Activated CD4-positive, alpha-beta memory T cell treated with anti-CD3 and anti-CD28 coated beads for 36 hours (primary cell): ENCODE measurements at regions of chr16 and their contacts with region 1.

Region 1: DNA sequence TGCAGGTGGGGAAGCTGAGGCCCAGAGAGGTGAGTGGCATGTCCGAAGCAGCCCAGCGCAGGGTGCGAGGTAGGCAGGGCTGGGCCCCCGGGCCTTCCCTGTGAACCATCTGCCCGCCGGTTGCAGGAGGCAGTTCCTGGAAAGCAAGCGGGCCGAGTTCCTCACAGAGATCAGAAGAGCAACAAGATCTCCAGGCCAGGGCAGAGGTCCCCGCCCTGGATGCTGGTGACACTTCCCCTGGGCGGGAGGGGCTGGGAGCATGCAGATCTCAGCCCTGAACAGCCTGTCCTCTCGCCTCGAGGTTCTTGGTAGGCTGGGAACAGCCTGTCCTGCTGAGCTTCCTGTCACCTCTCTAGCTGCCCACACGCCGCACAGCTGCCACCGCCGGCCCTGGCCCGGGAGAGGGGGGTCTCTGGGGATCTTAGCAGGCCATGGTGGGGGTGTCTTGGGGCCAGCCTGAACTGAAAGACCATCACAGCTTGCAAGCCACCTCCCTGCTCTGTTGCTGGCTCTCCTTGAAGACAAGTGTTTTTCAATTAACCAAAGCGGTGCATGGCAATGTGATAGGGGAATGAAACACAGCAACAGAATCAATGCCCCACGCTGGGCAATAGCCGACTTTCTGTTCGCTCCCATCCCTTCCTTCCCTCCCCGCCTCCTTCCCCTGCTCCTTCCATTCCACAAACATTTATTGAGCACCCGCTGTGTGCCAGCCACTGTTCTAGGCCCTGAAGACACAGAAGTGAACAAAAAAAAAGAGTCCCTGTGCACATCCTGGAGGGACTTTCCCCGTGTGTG is 31.7 kb downstream of the SOCS1 start:
- DNase-seq: peak; percentile 88
- H3K4me3 Mint-ChIP-seq: peak overlapping the region; percentile 71
- H3K27ac Mint-ChIP-seq: peak overlapping the region; percentile 99
- H3K4me1 Mint-ChIP-seq: peaks cover 56% of the 10 kb centered on the region
- H3K27me3 Mint-ChIP-seq: no peaks in the 10 kb centered on the region

Region 2: DNA sequence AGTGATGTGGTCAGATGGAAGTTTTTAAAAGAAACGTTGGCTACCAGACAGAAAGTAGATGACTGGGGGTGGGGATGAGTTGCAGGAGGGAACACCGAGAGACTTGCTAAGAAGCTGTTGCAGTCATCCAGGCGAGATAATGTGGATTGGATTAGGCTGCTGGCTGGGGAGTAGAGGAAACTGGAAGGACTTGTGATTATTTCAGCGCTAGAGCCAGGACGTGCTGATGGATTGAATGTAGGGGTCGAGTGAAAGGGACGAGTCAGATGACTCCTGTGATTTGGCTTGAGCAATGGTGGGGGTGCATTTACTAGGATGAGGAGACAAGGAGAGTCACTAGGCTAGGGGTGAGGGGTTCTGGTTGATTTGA is 191.4 kb before region 1 on chr16:
- CTCF ChIA-PET with region 1: no interaction called
- POLR2A ChIA-PET with region 1: no interaction called
- intact Hi-C with region 1: no loop called
- DNase-seq: no peak
- H3K4me3 Mint-ChIP-seq: no peak overlapping the region
- H3K27ac Mint-ChIP-seq: no peak overlapping the region
- H3K4me1 Mint-ChIP-seq: peaks cover 2% of the 10 kb centered on the region
- H3K27me3 Mint-ChIP-seq: no peaks in the 10 kb centered on the region

Region 3: DNA sequence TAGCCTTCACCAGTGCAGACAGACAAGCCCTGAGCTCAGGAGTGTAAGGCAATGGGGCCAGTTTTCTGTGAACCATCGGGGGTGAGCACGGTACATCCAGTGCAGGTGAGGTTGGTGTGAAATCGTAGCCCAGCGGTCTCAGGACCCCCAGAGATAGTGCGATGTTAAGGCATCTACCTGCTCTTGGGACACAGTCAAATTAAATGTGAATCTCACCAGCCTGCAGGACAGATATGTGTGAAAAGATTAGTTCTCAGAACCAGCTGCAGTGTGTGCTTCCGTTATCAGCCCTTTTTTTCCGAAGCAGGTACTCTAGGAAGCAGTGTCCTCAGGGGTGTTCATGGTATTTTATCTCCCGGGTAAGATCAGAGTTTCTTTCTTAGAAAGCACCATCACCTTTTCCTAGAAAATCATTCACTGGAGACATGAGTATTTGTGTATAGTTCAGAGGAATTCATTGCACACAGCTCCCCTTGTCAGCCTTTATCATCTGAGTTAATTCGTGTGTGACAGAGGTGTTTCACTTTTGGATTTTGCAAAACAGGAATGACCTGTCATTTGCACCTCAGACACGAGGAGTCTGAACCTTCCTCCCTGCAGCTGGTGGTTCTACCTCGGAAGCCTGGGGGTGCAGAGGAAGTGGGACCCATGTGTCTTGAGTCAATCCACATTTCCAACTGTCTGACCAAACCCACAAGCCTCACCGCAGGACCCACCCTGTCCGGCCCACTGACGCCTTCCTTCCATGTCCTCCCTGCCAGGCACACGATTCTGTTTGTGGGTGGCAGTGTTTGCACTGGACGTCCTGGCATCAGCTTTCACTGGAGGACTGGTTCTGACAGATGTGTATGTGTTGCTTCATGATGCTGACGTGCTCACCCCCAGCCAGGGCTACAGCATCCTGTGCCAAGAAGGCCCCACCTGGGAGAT is 172.2 kb before region 1 on chr16:
- CTCF ChIA-PET with region 1: interaction called, 3 read pairs
- POLR2A ChIA-PET with region 1: interaction called, 20 read pairs
- intact Hi-C with region 1: loop called (anchors 1 kb)
- DNase-seq: peak; percentile 94
- H3K4me3 Mint-ChIP-seq: peak overlapping the region; percentile 24
- H3K27ac Mint-ChIP-seq: peak overlapping the region; percentile 94
- H3K4me1 Mint-ChIP-seq: peaks cover 64% of the 10 kb centered on the region
- H3K27me3 Mint-ChIP-seq: no peaks in the 10 kb centered on the region

Region 4: DNA sequence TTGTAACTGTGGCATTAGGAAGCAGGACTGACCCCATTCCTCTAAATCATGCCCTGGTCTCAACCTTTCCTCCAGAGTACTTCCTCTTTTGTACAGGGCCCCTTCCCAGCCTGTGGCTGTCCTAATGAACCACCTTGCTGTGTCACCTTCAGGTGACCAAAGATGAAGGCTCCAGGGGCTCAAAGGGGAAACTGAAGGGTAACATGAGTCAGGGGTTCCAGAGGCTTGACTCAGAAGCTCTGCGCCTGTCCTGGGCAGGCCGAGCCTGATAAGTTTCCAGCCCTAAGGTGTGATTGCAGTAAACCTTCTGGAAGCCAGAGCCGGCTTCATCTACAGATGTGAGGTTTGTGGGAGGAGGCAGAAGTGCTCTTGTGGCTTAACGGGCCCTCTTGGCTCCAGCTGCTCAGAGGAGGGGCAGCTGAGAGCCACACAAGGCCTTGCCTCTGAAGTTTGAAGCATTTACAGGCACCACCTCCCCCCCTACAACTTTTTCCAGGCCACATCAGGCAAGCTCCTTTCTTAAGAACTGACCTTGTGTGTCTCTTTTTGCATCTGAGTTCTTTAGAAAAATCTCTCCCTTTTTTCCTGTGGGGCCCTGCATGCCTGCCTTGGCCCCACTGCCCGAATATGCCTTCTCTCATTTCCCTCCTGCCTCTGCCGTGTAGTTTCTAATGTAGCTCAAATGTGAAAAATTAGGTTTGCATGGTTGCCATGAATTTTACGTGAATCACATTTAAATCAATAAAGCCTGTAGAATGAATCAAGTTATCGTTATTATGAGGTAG is 130.0 kb before region 1 on chr16:
- CTCF ChIA-PET with region 1: interaction called, 7 read pairs
- POLR2A ChIA-PET with region 1: interaction called, 28 read pairs
- intact Hi-C with region 1: loop called (anchors 1 kb)
- DNase-seq: peak; percentile 87
- H3K4me3 Mint-ChIP-seq: peak overlapping the region; percentile 49
- H3K27ac Mint-ChIP-seq: peak overlapping the region; percentile 98
- H3K4me1 Mint-ChIP-seq: peaks cover 82% of the 10 kb centered on the region
- H3K27me3 Mint-ChIP-seq: no peaks in the 10 kb centered on the region

Region 5: GRCh38 chr16:11114366-11115164 is 109.7 kb before region 1 on chr16:
- CTCF ChIA-PET with region 1: no interaction called
- POLR2A ChIA-PET with region 1: interaction called, 10 read pairs
- intact Hi-C with region 1: loop called (anchors 1 kb)
- DNase-seq: peak; percentile 71
- H3K4me3 Mint-ChIP-seq: peak overlapping the region; percentile 60
- H3K27ac Mint-ChIP-seq: peak overlapping the region; percentile 88
- H3K4me1 Mint-ChIP-seq: peaks cover 73% of the 10 kb centered on the region
- H3K27me3 Mint-ChIP-seq: no peaks in the 10 kb centered on the region

Region 6: GRCh38 chr16:11175787-11176341 is 48.4 kb before region 1 on chr16:
- CTCF ChIA-PET with region 1: interaction called, 3 read pairs
- POLR2A ChIA-PET with region 1: interaction called, 4 read pairs
- intact Hi-C with region 1: loop called (anchors 1 kb)
- DNase-seq: peak; percentile 79
- H3K4me3 Mint-ChIP-seq: no peak overlapping the region
- H3K27ac Mint-ChIP-seq: peak overlapping the region; percentile 87
- H3K4me1 Mint-ChIP-seq: peaks cover 50% of the 10 kb centered on the region
- H3K27me3 Mint-ChIP-seq: no peaks in the 10 kb centered on the region

Region 7: DNA sequence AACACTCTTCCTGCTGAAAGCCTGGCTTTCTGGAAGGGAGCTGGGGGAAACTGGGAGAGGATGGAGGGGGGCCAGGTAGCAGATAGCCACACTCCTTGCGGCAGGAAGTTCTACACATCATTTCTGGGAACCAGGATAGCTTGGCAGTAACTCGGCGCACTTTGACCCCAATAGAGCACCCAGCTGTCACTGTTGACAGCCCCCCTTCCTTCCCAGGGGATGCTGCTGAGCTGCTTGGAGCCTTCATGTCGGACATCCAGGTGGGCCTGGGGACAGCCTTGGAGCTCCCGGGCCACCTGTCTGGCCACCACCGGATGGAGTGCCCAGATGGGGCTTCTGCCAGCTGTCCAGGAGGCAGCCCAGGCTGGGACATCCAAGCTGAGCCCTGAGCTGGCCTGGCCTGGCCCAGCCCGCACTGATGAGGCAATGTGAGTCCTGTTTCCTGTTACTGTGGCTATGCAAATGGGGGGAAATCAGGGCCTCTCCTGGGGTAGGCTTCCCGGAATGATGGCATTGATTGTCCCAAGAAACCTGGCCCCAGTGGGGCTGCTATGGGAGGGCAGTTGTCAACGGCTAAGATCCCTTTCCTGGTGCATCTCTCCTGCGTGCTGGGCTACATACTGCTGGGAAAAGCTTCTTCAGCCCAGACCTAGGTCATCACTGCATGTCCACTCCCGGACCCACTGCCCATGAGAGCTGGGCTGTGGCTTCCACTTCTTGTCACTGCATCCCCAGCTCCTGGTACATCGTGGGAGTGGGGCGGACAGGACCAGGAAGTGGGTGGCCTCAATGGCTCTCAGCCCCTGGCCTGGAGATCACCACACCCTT is 18.3 kb before region 1 on chr16:
- CTCF ChIA-PET with region 1: interaction called, 3 read pairs
- POLR2A ChIA-PET with region 1: interaction called, 14 read pairs
- intact Hi-C with region 1: loop called (anchors 1 kb)
- DNase-seq: peak; percentile 62
- H3K4me3 Mint-ChIP-seq: no peak overlapping the region
- H3K27ac Mint-ChIP-seq: peak overlapping the region; percentile 91
- H3K4me1 Mint-ChIP-seq: peaks cover 29% of the 10 kb centered on the region
- H3K27me3 Mint-ChIP-seq: no peaks in the 10 kb centered on the region